Activated CD8-positive, alpha-beta memory T cell treated with anti-CD3 and anti-CD28 coated beads, Interleukin-2, amount 10 ng/mL, durations not matched to agents 7 days and 5 days (primary cell): ENCODE measurements at regions of chr17 and their contacts with region 1.

Region 1: GRCh38 chr17:79839363-79840268 is at the start of gene CBX4:
- DNase-seq: peak; percentile 94
- ATAC-seq: peak; percentile 81
- H3K4me3 Mint-ChIP-seq: peak within 1 kb of the TSS; percentile 97
- H3K27ac Mint-ChIP-seq: peak within 1 kb of the TSS; percentile 96
- H3K4me1 Mint-ChIP-seq: peaks cover 36% of the 10 kb centered on the region
- H3K27me3 Mint-ChIP-seq: peaks cover 39% of the 10 kb centered on the region
- total RNA-seq, gene CBX4: 28.3 to 36.7 TPM

Region 2: GRCh38 chr17:79746889-79747507 is 92.6 kb before region 1 on chr17:
- CTCF ChIA-PET with region 1: interaction called, 15 read pairs
- DNase-seq: no peak
- ATAC-seq: no peak
- H3K4me3 Mint-ChIP-seq: no peak overlapping the region
- H3K27ac Mint-ChIP-seq: no peak overlapping the region
- H3K4me1 Mint-ChIP-seq: peaks cover 5% of the 10 kb centered on the region
- H3K27me3 Mint-ChIP-seq: peaks cover 55% of the 10 kb centered on the region

Region 3: DNA sequence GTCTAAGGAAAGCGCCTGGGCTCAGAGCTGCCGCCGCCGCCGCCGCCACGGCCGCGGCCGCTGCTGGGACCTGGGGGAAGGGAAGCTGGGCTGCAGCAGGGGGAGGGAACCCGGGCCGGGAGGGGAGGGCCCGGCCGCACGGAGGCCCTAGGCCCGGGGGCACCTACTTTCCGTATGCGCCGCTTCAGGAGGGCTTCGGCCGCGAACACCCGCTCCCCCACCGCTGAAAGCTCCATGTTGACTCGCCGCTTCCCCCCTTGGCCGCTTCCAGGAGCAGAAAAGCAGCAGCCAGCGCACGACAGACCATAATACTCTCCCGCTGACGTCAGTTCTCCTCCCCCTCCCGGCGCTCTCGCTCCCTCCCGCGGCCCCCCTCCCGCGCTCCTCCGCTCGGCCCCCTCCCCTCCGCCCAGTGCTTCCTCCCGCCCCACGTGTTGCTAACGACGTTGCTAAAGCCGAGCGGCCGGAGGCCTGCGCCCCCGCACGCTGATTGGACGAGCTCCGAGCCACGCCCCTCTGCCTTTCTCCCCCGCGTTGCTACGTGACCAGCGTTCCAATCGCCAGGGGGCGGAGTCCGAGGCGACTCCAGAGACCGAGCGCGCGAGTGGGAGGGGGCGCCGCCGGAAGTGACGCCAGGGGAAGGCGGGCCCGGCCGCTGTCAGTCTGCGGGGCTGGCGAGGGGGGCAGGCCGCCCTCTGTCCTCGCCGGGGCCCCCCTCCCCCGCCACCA is 42.7 kb before region 1 on chr17 and contains the start of gene CBX8:
- CTCF ChIA-PET with region 1: interaction called, 37 read pairs
- DNase-seq: peak; percentile 100
- ATAC-seq: peak; percentile 93
- H3K4me3 Mint-ChIP-seq: peak within 1 kb of the TSS; percentile 85
- H3K27ac Mint-ChIP-seq: peak within 1 kb of the TSS; percentile 83
- H3K4me1 Mint-ChIP-seq: peaks cover 27% of the 10 kb centered on the region
- H3K27me3 Mint-ChIP-seq: peaks cover 44% of the 10 kb centered on the region
- total RNA-seq, gene CBX8: 6.8 to 8.6 TPM

Region 4: GRCh38 chr17:79803997-79804855 is 35.4 kb before region 1 on chr17:
- CTCF ChIA-PET with region 1: interaction called, 38 read pairs
- DNase-seq: peak; percentile 84
- ATAC-seq: peak; percentile 77
- H3K4me3 Mint-ChIP-seq: peak overlapping the region; percentile 59
- H3K27ac Mint-ChIP-seq: peak overlapping the region; percentile 75
- H3K4me1 Mint-ChIP-seq: peaks cover 38% of the 10 kb centered on the region
- H3K27me3 Mint-ChIP-seq: peaks cover 87% of the 10 kb centered on the region

Region 5: DNA sequence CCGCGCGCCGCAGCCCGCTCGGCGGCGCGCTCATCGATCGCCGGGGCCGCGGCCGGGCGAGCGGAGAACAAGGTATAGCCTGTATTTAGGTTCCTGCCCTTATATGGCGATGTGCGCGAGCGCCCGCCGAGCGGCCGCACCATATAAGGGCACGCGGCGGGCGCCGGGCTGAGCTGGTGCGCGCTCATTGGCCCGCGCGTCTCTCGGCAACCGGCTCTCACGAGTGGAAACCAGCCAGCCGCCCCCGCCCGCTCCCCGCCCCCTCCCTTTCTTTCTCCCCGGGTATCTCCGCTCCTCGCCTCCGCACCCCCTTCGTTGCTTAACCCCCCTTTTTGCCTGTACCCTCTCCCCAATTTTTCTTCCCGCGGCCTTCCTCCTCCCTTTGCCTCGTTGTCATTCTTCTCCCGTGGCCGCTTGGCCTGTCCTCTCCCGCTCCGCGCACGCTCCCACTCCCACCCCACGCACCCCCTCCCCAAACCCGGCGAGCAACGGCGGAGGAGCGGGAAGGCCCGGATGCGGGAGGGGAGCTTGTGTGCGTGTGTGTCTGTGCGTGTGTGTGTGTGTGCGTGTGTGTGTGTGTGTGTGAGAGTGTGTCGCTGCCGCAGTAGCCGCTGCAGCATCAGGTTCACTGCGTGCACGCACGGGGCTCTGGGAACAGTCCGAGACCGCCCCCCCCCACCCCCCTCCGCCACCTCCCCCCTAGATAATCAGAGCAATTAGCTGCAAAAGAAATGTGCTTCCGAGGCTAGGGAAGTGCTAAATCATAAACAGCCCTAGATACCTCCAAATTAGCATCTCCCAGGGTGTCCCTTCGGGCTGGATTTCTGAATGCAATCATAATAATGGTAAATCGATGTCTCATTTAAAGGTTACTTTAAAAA is 29.2 kb before region 1 on chr17:
- CTCF ChIA-PET with region 1: interaction called, 44 read pairs
- DNase-seq: peak; percentile 81
- ATAC-seq: peak; percentile 95
- H3K4me3 Mint-ChIP-seq: no peak overlapping the region
- H3K27ac Mint-ChIP-seq: no peak overlapping the region
- H3K4me1 Mint-ChIP-seq: peaks cover 29% of the 10 kb centered on the region
- H3K27me3 Mint-ChIP-seq: peaks cover 67% of the 10 kb centered on the region

Region 6: GRCh38 chr17:79818026-79818758 is 21.4 kb before region 1 on chr17:
- CTCF ChIA-PET with region 1: interaction called, 44 read pairs
- DNase-seq: no peak
- ATAC-seq: no peak
- H3K4me3 Mint-ChIP-seq: no peak overlapping the region
- H3K27ac Mint-ChIP-seq: no peak overlapping the region
- H3K4me1 Mint-ChIP-seq: peaks cover 3% of the 10 kb centered on the region
- H3K27me3 Mint-ChIP-seq: peaks cover 66% of the 10 kb centered on the region

Region 7: DNA sequence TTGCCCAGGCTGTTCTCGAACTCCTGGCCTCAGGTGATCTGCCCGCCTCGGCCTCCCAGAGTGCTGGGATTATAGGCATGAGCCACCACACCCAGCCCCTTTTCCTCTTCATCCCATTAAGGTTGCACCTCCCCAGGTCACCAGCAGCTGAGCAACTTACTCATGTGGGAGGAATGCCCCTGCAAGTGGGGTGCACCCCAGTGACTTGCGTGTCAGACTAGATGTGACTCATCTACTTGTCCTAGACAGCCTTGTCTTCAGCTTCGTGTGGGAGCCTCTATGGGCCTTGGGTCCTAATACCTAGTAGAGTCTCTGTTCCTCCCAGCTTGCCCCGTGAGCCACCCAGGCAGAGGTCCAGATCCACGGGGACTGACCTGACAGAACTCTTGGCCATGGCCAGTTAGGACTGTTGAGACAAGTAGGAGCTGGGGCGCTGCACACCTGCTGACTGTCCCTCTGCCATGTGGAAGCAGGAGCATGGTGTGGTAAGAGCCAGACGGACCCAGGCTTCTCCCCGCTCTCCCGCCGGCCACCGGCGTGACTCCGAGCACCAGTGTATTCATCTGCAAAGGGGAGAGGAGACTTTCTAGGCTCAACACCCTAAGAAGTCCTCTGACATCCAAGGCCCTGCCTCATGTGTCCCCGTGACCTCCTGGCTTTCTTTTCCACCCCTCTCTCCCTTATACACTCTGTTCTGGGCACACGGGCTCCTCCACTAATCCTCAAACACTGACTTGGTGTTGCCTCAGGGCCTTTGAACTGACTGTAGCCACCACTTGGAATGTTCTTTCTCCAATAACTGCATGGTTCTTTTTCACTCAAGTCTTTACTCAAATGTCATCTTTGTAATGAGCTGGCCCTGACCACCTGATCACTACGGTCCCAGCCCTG is 11.2 kb after region 1 on chr17:
- CTCF ChIA-PET with region 1: interaction called, 23 read pairs
- DNase-seq: no peak
- ATAC-seq: peak; percentile 30
- H3K4me3 Mint-ChIP-seq: no peak overlapping the region
- H3K27ac Mint-ChIP-seq: no peak overlapping the region
- H3K4me1 Mint-ChIP-seq: peaks cover 7% of the 10 kb centered on the region
- H3K27me3 Mint-ChIP-seq: peaks cover 28% of the 10 kb centered on the region

Region 8: DNA sequence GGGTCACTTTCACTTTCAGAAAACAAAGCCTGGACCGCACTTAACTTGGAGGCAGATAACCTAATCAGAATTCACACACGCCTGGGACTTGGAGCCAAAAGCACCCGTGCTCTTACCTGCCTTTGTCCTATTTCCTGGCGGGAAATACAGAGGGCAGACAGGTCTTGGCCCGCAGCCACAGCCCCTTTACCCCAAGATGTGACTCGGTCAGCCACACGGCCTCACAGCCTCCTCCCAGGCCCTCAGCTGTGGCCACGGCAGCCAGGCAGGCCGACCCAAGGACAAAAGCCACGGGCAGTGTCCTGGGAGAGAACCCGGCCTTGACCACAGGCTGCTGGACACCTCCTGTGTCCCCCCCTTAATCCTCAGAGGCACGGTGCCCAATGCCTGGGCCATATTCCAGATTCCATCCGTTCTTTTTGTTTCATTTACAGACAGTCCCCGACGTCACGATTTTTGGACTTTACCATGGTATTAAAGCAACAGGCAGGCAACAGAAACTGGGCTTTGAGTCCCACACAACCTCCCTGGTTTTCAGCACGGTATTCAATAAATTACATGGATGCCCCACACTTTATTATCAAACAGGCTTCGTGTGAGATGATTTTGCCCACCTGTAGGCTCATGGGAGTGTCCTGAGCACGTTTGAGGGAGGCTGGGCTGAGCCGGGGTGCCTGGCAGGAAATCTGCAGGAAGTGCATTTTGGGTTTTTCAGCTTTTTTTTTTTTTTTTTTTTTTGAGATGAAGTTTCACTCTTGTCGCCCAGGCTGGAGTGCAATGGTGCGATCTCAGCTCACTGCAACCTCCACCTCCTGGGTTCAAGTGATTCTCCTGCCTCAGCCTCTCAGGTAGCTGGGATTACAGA is 231.7 kb after region 1 on chr17:
- CTCF ChIA-PET with region 1: no interaction called
- DNase-seq: no peak
- ATAC-seq: no peak
- H3K4me3 Mint-ChIP-seq: no peak overlapping the region
- H3K27ac Mint-ChIP-seq: no peak overlapping the region
- H3K4me1 Mint-ChIP-seq: peaks cover 4% of the 10 kb centered on the region
- H3K27me3 Mint-ChIP-seq: peaks cover 7% of the 10 kb centered on the region